ENCODE measurements at regions of chr20 and their contacts with region 1.

Region 1: DNA sequence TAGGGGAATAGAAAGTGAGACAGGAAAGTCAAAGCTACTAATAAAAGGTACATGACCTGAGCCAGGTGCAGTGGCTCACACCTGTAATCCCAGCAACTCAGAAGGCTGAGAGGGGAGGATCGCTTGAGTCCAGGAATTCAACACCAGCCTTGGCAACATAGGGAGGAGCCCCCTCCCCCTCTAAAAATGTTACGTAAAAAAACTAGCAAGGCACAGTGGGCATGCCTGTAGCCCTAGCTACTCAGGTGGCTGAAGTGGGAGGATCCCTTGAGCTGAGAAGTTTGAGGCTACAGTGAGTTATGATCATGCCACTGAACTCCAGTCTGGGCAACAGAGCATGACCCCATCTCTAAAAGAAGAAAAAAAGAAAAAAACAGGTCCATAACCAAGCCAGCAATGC is 186.1 kb upstream of the RIN2 start:
- DNase-seq: no peak
- ATAC-seq: no peak
- H3K4me3 ChIP-seq: no peak overlapping the region
- H3K27ac ChIP-seq: no peak overlapping the region
- H3K4me1 ChIP-seq: no peaks in the 10 kb centered on the region
- H3K27me3 ChIP-seq: no peaks in the 10 kb centered on the region
- CTCF ChIP-seq: no peak

Region 2: GRCh38 chr20:19212821-19213502 is 359.0 kb before region 1 on chr20:
- intact Hi-C with region 1: loop called in 1 of 3 experiments (anchors 10 kb)
- DNase-seq: peak; percentile 30 to 83 (median 51)
- ATAC-seq: peak; percentile 58 to 89 (median 88)
- H3K4me3 ChIP-seq: peak overlapping the region in 2 of 4 donors; percentile 27 to 45
- H3K27ac ChIP-seq: no peak overlapping the region
- H3K4me1 ChIP-seq: peaks cover 0 to 5% (median 3%) of the 10 kb centered on the region in 3 donors
- H3K27me3 ChIP-seq: peaks cover 0 to 5% (median 0%) of the 10 kb centered on the region in 4 donors
- CTCF ChIP-seq: no peak

Region 3: DNA sequence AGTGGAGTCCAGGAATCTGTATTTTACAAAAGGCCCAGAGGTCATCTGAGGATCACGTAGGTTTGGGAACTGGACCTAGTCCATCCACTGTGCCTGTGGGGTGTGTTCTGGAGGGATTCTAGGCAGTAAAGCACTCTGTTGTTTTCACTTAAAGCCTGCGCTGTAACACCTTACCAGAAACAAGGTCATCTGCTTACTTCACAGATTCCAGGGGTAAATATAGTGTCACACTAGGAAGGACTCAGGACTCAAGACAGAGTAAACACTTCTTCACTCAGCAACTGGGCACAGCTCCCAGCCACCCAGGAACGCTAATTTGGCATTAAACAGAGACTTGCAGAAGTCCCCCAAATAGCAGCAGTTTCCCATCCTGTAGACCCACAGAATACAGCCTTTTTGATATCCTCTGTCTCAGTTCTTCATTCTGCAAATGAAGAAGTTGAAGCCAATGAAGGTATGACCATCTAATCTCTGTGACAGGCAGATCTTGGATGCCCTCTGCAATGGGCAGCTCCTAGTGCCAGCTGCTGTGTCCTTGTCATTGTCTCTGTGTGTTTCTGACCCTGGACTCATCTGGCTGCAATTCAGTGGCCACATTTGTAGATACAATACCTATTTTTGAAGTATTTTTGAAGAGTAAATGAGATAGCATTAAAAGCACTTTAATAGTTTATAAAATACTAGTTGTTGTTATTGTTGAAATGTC is 230.5 kb before region 1 on chr20:
- intact Hi-C with region 1: no loop called
- DNase-seq: no peak
- ATAC-seq: peak in 3 of 4 donors; percentile 26 to 59 (median 32)
- H3K4me3 ChIP-seq: no peak overlapping the region
- H3K27ac ChIP-seq: no peak overlapping the region
- H3K4me1 ChIP-seq: no peaks in the 10 kb centered on the region
- H3K27me3 ChIP-seq: no peaks in the 10 kb centered on the region
- CTCF ChIP-seq: no peak

Region 4: DNA sequence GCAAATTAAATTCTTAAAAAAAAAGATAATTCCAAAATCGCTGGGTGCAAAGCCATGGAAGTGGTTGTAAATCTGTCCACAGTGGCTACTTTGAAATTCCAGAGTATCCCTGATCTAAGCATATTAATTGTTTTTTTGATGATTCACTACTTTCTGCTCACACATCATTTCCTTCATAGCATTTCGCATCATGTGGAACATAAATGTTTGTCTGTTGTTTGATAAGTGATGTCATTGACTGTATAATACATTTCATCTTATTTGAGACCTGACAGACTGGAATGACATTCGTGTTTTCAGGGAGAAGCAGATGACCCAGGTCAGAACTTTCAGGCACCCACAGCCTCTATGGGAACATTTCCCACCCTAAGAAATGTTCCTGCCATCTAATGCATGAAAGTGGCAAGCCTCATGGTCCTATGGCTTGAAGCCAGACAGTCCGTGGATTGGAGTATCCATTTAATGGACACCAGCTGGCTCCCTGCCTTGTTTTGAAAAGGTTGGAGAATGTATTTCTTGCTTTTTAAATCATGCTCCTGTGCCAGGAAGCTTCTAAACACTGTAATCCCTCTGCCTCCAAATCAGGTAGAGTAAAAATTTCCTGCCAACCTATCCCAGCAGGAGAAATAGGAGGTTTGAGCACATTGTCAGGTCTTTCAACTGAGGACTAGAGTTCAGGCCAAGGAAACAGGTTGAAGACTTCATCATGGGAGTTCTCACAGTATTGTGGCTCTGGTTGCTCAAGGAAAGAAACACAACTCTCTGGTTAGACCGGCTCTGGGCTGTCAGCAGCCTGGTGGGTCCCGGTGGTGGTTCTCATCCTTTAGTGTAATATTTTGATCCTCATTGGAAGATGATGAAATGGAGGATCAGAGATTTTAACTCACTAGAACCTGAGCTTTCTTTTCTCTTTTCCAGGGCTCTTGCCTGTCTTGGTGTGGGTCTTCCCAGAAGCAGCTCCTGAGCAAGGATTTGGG is 201.6 kb before region 1 on chr20:
- intact Hi-C with region 1: no loop called
- DNase-seq: no peak
- ATAC-seq: no peak
- H3K4me3 ChIP-seq: no peak overlapping the region
- H3K27ac ChIP-seq: no peak overlapping the region
- H3K4me1 ChIP-seq: no peaks in the 10 kb centered on the region
- H3K27me3 ChIP-seq: no peaks in the 10 kb centered on the region
- CTCF ChIP-seq: no peak